ENCODE measurements at regions of chr1 and their contacts with region 1.

Region 1: DNA sequence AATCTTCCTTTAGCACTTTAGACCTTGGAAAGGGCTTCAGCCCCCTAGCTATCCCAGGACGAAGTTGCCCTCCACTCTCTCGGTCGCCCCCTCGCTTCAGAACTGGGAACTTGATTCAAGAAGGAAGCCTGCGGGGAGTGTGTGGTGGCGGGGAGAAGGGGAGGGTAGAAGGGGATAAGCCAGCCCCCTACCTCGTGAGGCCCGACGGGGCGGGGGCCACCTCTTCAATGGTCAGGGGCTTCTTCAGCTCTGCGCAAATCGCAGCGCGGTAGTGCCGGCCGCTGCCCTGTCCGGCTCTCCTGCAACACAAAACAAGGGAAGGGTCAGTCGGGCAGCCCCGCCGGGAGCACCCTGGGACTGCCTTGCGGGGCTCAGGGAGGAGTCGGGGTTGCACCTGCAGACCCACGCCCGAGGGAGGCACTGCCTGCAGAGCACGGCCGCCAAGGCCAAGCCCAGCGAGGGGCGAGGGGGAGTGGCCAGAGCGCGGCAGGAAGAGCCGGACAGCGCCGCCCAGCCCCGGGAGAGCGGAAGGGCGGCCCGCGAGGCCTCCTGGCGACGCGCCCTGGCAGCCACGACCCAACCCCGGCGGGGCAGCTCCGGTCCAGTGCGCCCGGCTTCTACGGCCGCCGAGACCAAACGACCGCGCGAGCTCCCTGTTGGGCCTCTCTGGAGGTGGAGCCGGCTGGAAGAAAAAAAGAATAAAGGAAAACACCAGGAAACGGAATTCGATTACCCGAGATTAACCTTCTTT is 56.2 kb upstream of the RASAL2 start:
- DNase-seq: peak; percentile 89 to 95
- ATAC-seq: peak; percentile 96 to 100 (median 98)
- H3K4me3 ChIP-seq: peak overlapping the region; percentile 19 to 93 (median 77)
- H3K27ac ChIP-seq: peak overlapping the region; percentile 35 to 93 (median 88)
- H3K4me1 ChIP-seq: peaks cover 0 to 43% (median 19%) of the 10 kb centered on the region in 9 donors
- H3K27me3 ChIP-seq: no peaks in the 10 kb centered on the region
- CTCF ChIP-seq: peak; percentile 27 to 73 (median 54)

Region 2: DNA sequence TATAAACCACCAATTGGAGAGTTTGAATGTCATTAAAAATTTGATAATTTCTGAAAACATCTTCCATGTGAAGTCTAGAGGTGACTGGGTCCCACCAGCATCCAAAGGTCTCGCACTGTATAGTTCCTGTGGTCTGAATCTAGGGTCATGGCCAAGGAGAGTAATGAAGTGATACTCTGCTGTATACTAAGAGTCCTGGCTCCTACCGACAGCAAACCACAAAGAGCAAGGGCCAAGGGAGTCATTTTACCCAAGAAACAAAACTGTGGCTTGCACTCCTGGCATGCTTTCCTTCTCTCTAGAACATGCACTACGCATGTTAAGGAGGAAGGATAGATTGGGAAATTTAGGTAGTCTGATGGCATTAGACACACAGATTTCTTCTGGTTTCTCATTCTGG is 751.3 kb before region 1 on chr1:
- intact Hi-C with region 1: no loop called
- DNase-seq: no peak
- ATAC-seq: no peak
- H3K4me3 ChIP-seq: no peak overlapping the region
- H3K27ac ChIP-seq: no peak overlapping the region
- H3K4me1 ChIP-seq: no peaks in the 10 kb centered on the region
- H3K27me3 ChIP-seq: no peaks in the 10 kb centered on the region
- CTCF ChIP-seq: no peak

Region 3: GRCh38 chr1:178055779-178056471 is 18.2 kb after region 1 on chr1:
- intact Hi-C with region 1: loop called in 3 of 10 experiments (anchors 2 kb)
- DNase-seq: peak in 1 of 2 donors; percentile 38
- ATAC-seq: peak in 6 of 8 donors; percentile 43 to 64 (median 48)
- H3K4me3 ChIP-seq: no peak overlapping the region
- H3K27ac ChIP-seq: peak overlapping the region; percentile 72 to 95 (median 82)
- H3K4me1 ChIP-seq: peaks cover 31 to 97% (median 90%) of the 10 kb centered on the region in 9 donors
- H3K27me3 ChIP-seq: no peaks in the 10 kb centered on the region
- CTCF ChIP-seq: peak in 7 of 9 donors; percentile 4 to 53 (median 26)

Region 4: DNA sequence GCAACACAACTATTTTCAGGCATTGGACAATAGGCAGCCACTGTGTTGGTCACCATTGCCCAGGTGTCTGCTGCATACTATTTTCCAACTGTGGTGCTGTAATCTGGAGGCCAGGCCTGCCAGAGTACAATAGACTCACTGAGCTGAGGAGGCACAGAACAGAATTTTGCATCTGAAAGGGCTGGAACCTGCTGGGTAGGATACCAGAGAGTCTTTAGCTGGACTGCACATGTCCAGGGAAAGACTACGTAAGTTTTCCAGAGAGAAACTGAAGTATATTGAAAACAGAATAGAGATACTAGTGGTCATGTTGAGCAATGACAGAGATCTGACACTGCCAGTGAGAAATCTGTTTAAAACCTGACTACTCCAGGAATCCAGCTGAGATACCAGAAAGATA is 257.0 kb after region 1 on chr1:
- intact Hi-C with region 1: loop called in 3 of 10 experiments (anchors 5 to 10 kb)
- DNase-seq: no peak
- ATAC-seq: peak in 3 of 8 donors; percentile 19 to 40 (median 26)
- H3K4me3 ChIP-seq: no peak overlapping the region
- H3K27ac ChIP-seq: no peak overlapping the region
- H3K4me1 ChIP-seq: peaks cover 0 to 29% (median 4%) of the 10 kb centered on the region in 9 donors
- H3K27me3 ChIP-seq: no peaks in the 10 kb centered on the region
- CTCF ChIP-seq: no peak